ENCODE measurements at regions of chr15 and their contacts with region 1.

Region 1: GRCh38 chr15:41811432-41812195 is 16.3 kb upstream of the JMJD7 start:
- DNase-seq: peak; percentile 52 to 73
- H3K4me3 ChIP-seq: no peak overlapping the region
- H3K27ac ChIP-seq: no peak overlapping the region
- H3K4me1 ChIP-seq: no peaks in the 10 kb centered on the region
- H3K27me3 ChIP-seq: no peaks in the 10 kb centered on the region
- CTCF ChIP-seq: peak; percentile 78

Region 2: DNA sequence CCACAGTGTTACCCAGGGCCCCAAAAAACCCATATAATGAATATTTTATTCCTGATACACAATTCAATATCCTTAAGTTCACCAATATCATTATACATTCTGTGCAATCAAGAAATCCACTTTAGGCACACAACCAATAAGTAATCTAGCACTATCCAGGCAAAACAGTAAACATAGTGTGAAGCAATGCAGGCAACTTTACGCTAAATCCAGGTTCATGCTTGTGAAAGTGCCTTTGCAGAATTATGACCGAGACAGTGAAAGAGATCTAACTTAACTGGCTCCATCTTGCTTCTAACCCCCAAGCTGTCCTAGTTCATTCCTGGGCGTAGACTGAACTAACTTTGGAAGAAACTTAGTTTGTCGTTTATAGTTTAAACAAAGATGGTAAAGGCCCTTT is 661.3 kb before region 1 on chr15:
- CTCF ChIA-PET with region 1: no interaction called
- POLR2A ChIA-PET with region 1: no interaction called
- intact Hi-C with region 1: no loop called
- DNase-seq: no peak
- H3K4me3 ChIP-seq: no peak overlapping the region
- H3K27ac ChIP-seq: no peak overlapping the region
- H3K4me1 ChIP-seq: peaks cover 31% of the 10 kb centered on the region
- H3K27me3 ChIP-seq: no peaks in the 10 kb centered on the region
- CTCF ChIP-seq: no peak

Region 3: GRCh38 chr15:41429003-41429890 is 382.4 kb before region 1 on chr15:
- CTCF ChIA-PET with region 1: no interaction called
- POLR2A ChIA-PET with region 1: interaction called, 25 read pairs
- intact Hi-C with region 1: no loop called
- DNase-seq: no peak
- H3K4me3 ChIP-seq: no peak overlapping the region
- H3K27ac ChIP-seq: no peak overlapping the region
- H3K4me1 ChIP-seq: no peaks in the 10 kb centered on the region
- H3K27me3 ChIP-seq: no peaks in the 10 kb centered on the region
- CTCF ChIP-seq: no peak

Region 4: GRCh38 chr15:41465822-41466421 is 345.7 kb before region 1 on chr15:
- CTCF ChIA-PET with region 1: interaction called, 3 read pairs
- POLR2A ChIA-PET with region 1: no interaction called
- intact Hi-C with region 1: loop called (anchors 1 kb)
- DNase-seq: no peak
- H3K4me3 ChIP-seq: no peak overlapping the region
- H3K27ac ChIP-seq: no peak overlapping the region
- H3K4me1 ChIP-seq: no peaks in the 10 kb centered on the region
- H3K27me3 ChIP-seq: no peaks in the 10 kb centered on the region
- CTCF ChIP-seq: peak; percentile 82

Region 5: DNA sequence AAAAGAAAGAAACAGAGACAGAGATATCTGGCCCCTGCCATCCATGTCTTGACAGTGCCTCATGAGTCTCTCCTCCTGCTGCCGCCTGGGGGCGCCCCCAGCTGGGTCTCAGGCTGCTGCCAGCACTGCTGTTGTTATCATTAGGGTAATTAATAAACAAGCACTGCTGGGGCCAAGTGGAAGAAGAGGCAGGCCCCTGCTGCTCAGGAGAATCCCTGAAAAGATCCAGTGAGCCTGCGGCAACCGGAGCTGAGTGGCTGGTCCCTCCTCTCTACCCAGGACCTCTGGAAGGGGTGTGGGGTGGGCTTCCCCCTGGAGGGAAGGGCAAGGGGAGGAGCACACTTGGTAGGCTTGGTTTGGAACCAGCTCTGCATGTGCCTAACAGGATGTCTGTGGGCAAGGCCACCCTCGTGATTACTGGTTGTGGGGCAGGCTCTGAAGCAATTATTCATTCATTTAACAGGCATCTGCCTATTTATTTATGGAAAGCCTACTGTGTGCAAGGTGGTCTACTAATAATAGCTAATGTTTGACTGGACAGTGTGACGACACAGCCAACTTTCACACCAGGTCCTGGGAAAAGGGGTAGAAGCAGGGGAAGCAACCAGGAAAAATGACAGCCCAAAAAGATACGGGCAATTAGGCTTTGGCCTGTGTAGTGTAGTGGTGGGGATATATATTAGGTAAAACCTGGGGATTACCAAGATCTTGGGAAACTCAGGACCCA is 253.8 kb before region 1 on chr15:
- CTCF ChIA-PET with region 1: no interaction called
- POLR2A ChIA-PET with region 1: no interaction called
- intact Hi-C with region 1: loop called (anchors 10 kb)
- DNase-seq: peak in 1 of 2 experiments; percentile 60
- H3K4me3 ChIP-seq: peak overlapping the region; percentile 62; the same call in 1 of the 2 replicates
- H3K27ac ChIP-seq: no peak overlapping the region
- H3K4me1 ChIP-seq: peaks cover 17% of the 10 kb centered on the region; the same call in 1 of the 2 replicates
- H3K27me3 ChIP-seq: no peaks in the 10 kb centered on the region
- CTCF ChIP-seq: peak; percentile 81

Region 6: GRCh38 chr15:41585127-41586047 is 226.2 kb before region 1 on chr15:
- CTCF ChIA-PET with region 1: interaction called, 6 read pairs
- POLR2A ChIA-PET with region 1: no interaction called
- intact Hi-C with region 1: loop called (anchors 1 kb)
- DNase-seq: peak; percentile 57 to 64
- H3K4me3 ChIP-seq: peak overlapping the region; percentile 38; the same call in 1 of the 2 replicates
- H3K27ac ChIP-seq: 0 out of 2 replicates have a peak overlapping the region, but pooled peaks have one; percentile 23
- H3K4me1 ChIP-seq: peaks cover 22% of the 10 kb centered on the region
- H3K27me3 ChIP-seq: no peaks in the 10 kb centered on the region
- CTCF ChIP-seq: no peak

Region 7: GRCh38 chr15:41790756-41791546 is 20.7 kb before region 1 on chr15:
- CTCF ChIA-PET with region 1: no interaction called
- POLR2A ChIA-PET with region 1: no interaction called
- intact Hi-C with region 1: no loop called
- DNase-seq: peak; percentile 41 to 71
- H3K4me3 ChIP-seq: no peak overlapping the region
- H3K27ac ChIP-seq: 0 out of 2 replicates have a peak overlapping the region, but pooled peaks have one; percentile 43
- H3K4me1 ChIP-seq: peaks cover 16% of the 10 kb centered on the region
- H3K27me3 ChIP-seq: no peaks in the 10 kb centered on the region
- CTCF ChIP-seq: no peak

Region 8: GRCh38 chr15:41904541-41905005 is 93.0 kb after region 1 on chr15:
- CTCF ChIA-PET with region 1: interaction called, 17 read pairs
- POLR2A ChIA-PET with region 1: no interaction called
- intact Hi-C with region 1: loop called (anchors 1 kb)
- DNase-seq: peak in 1 of 2 experiments; percentile 68
- H3K4me3 ChIP-seq: no peak overlapping the region
- H3K27ac ChIP-seq: no peak overlapping the region
- H3K4me1 ChIP-seq: no peaks in the 10 kb centered on the region
- H3K27me3 ChIP-seq: no peaks in the 10 kb centered on the region
- CTCF ChIP-seq: peak; percentile 80

Measured in PC-9 (cell line).